ENCODE measurements at regions of chrX and their contacts with region 1.

Region 1: GRCh38 chrX:56733459-56734046 is 4.5 kb downstream of the NBDY start:
- DNase-seq: peak; percentile 71
- H3K4me3 ChIP-seq: no peak overlapping the region
- H3K27ac ChIP-seq: no peak overlapping the region
- H3K4me1 ChIP-seq: peaks cover 0 to 12% (median 1%) of the 10 kb centered on the region in 4 donors
- H3K27me3 ChIP-seq: no peaks in the 10 kb centered on the region
- CTCF ChIP-seq: peak in 2 of 4 experiments; percentile 34 to 49
- EP300 ChIP-seq: no peak
- POLR2A ChIP-seq: no peak

Region 2: DNA sequence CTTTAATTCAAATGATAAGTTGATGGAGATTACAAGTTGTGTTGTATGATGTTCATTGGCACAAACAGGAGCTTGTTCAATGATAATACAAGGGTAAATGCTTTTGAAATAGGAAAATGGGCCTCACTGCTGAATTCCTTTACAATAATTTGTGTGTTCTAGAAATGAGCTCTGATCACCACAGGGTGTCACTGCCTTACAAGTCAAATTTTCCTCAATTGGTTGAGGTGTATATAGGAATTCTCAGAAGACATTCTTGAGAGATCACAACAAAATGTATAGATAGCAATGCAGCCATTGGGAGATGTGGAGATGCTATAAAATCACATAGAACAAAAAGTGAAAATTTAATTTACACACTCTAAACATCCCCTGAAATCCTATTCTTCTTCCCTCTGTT is 451.8 kb before region 1 on chrX:
- intact Hi-C with region 1: loop called (anchors 5 kb)
- DNase-seq: no peak
- H3K4me3 ChIP-seq: no peak overlapping the region
- H3K27ac ChIP-seq: no peak overlapping the region
- H3K4me1 ChIP-seq: no peaks in the 10 kb centered on the region
- H3K27me3 ChIP-seq: no peaks in the 10 kb centered on the region
- CTCF ChIP-seq: no peak
- EP300 ChIP-seq: no peak
- POLR2A ChIP-seq: no peak

Region 3: GRCh38 chrX:56462389-56462788 is 271.2 kb before region 1 on chrX:
- intact Hi-C with region 1: loop called (anchors 5 kb)
- DNase-seq: no peak
- H3K4me3 ChIP-seq: no peak overlapping the region
- H3K27ac ChIP-seq: no peak overlapping the region
- H3K4me1 ChIP-seq: no peaks in the 10 kb centered on the region
- H3K27me3 ChIP-seq: no peaks in the 10 kb centered on the region
- CTCF ChIP-seq: no peak
- EP300 ChIP-seq: no peak
- POLR2A ChIP-seq: no peak

Region 4: GRCh38 chrX:56563231-56564161 is 170.1 kb before region 1 on chrX and contains the start of gene UBQLN2:
- intact Hi-C with region 1: loop called (anchors 5 kb)
- DNase-seq: peak; percentile 92
- H3K4me3 ChIP-seq: peak within 1 kb of the TSS; percentile 53 to 68 (median 64)
- H3K27ac ChIP-seq: peak within 1 kb of the TSS; percentile 91 to 95 (median 94)
- H3K4me1 ChIP-seq: peaks cover 0 to 26% (median 6%) of the 10 kb centered on the region in 4 donors
- H3K27me3 ChIP-seq: no peaks in the 10 kb centered on the region
- CTCF ChIP-seq: no peak
- EP300 ChIP-seq: no peak
- POLR2A ChIP-seq: peak; percentile 68 to 73
- total RNA-seq, gene UBQLN2: 23.6 to 28.9 (median 25.4) TPM

Region 5: GRCh38 chrX:57137501-57137900 is 403.9 kb after region 1 on chrX:
- intact Hi-C with region 1: no loop called
- DNase-seq: no peak
- H3K4me3 ChIP-seq: peak overlapping the region in 3 of 4 donors; percentile 21 to 34 (median 33)
- H3K27ac ChIP-seq: no peak overlapping the region
- H3K4me1 ChIP-seq: no peaks in the 10 kb centered on the region
- H3K27me3 ChIP-seq: no peaks in the 10 kb centered on the region
- CTCF ChIP-seq: no peak
- EP300 ChIP-seq: no peak
- POLR2A ChIP-seq: no peak

Measured in sigmoid colon (tissue), 7 donors.